MCF 10A (cell line): ENCODE measurements at regions of chr20 and their contacts with region 1.

Region 1: GRCh38 chr20:645318-646106 is 7.5 kb downstream of the SRXN1 start:
- DNase-seq: peak; percentile 58
- H3K4me3 Mint-ChIP-seq: no peak overlapping the region
- H3K27ac Mint-ChIP-seq: no peak overlapping the region
- H3K4me1 Mint-ChIP-seq: peaks cover 5% of the 10 kb centered on the region
- H3K27me3 Mint-ChIP-seq: no peaks in the 10 kb centered on the region
- CTCF ChIP-seq: peak; percentile 91

Region 2: GRCh38 chr20:535958-536357 is 109.6 kb before region 1 on chr20:
- CTCF ChIA-PET with region 1: interaction called, 11 read pairs
- POLR2A ChIA-PET with region 1: no interaction called
- intact Hi-C with region 1: no loop called
- DNase-seq: no peak
- H3K4me3 Mint-ChIP-seq: peak overlapping the region; percentile 44
- H3K27ac Mint-ChIP-seq: no peak overlapping the region
- H3K4me1 Mint-ChIP-seq: peaks cover 39% of the 10 kb centered on the region
- H3K27me3 Mint-ChIP-seq: no peaks in the 10 kb centered on the region
- CTCF ChIP-seq: no peak

Region 3: DNA sequence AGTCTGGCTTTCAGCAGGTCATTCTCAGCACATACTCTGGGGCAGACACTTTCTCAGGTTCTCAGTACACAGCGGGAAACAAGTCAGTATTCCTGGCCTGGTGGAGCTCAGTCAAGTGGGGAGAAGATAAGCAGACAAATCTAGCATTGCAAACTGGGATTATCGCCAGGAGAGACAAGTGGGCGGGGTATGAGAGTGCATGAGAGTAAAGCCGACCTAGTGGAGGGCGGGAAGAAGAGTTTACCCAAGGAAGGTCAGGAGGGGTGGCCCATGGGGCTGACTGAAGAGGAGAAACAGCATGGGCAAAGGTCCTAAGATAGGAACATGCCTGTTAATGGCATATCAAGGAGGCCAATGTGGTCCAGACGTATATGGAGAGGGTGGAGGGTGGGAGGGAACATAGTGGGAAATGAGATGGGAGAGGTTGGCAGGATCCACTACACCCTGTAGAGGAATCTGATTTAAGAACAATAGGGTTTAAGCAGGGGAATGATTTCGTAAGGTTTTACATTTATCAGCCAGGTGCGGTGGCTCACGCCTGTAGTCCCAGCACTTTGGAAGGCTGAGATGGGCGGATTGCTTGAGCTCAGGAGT is 89.5 kb before region 1 on chr20:
- CTCF ChIA-PET with region 1: interaction called, 69 read pairs
- POLR2A ChIA-PET with region 1: interaction called, 4 read pairs
- intact Hi-C with region 1: loop called (anchors 1 kb)
- DNase-seq: peak; percentile 22
- H3K4me3 Mint-ChIP-seq: no peak overlapping the region
- H3K27ac Mint-ChIP-seq: no peak overlapping the region
- H3K4me1 Mint-ChIP-seq: peaks cover 7% of the 10 kb centered on the region
- H3K27me3 Mint-ChIP-seq: peaks cover 33% of the 10 kb centered on the region
- CTCF ChIP-seq: no peak

Region 4: DNA sequence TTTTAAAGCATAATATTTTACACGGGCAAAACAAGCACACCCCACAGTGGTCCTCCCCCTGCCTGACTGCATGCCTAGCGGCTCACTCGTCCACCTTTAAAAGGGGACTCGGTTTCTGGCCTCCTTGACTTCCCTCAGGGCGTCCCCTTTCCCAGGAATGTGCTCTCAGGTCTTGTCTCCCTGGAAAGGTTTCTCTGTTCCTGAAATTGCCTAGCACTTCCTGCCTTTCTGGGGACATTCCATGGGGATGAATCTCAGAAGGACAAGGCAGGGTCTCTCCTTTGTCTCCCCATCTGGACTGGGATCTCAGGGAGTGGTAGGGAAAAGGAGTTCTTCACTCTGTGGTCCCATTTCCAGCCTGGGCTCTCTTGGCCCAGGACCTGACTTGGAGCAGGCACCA is 40.3 kb before region 1 on chr20:
- CTCF ChIA-PET with region 1: interaction called, 11 read pairs
- POLR2A ChIA-PET with region 1: no interaction called
- intact Hi-C with region 1: no loop called
- DNase-seq: no peak
- H3K4me3 Mint-ChIP-seq: no peak overlapping the region
- H3K27ac Mint-ChIP-seq: no peak overlapping the region
- H3K4me1 Mint-ChIP-seq: no peaks in the 10 kb centered on the region
- H3K27me3 Mint-ChIP-seq: no peaks in the 10 kb centered on the region
- CTCF ChIP-seq: no peak

Region 5: DNA sequence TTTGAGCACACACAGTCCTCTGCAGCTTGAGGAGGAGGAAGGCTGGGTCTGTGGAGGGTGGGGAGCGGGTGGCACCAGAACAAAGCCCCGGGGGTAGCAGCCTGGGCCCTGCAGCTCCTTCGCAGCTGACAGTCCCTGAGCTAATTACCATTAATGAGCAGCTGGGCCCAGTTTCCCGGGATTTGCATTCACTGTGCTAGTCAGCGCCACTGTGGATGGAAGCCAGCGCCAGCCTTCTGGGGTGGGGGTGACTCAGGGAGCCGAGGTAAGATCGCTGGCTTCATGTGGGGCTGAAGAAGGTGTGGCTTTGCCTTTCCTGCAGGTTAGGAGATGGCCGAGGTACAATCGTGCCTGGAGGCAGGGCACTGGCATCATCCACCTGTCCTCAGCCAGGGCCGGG is 11.0 kb before region 1 on chr20:
- CTCF ChIA-PET with region 1: interaction called, 36 read pairs
- POLR2A ChIA-PET with region 1: interaction called, 3 read pairs
- intact Hi-C with region 1: no loop called
- DNase-seq: no peak
- H3K4me3 Mint-ChIP-seq: no peak overlapping the region
- H3K27ac Mint-ChIP-seq: no peak overlapping the region
- H3K4me1 Mint-ChIP-seq: no peaks in the 10 kb centered on the region
- H3K27me3 Mint-ChIP-seq: peaks cover 2% of the 10 kb centered on the region
- CTCF ChIP-seq: no peak

Region 6: GRCh38 chr20:667391-667964 is 22.0 kb after region 1 on chr20:
- CTCF ChIA-PET with region 1: interaction called, 11 read pairs
- POLR2A ChIA-PET with region 1: interaction called, 4 read pairs
- intact Hi-C with region 1: no loop called
- DNase-seq: peak; percentile 55
- H3K4me3 Mint-ChIP-seq: no peak overlapping the region
- H3K27ac Mint-ChIP-seq: no peak overlapping the region
- H3K4me1 Mint-ChIP-seq: no peaks in the 10 kb centered on the region
- H3K27me3 Mint-ChIP-seq: peaks cover 41% of the 10 kb centered on the region
- CTCF ChIP-seq: peak; percentile 86

Region 7: DNA sequence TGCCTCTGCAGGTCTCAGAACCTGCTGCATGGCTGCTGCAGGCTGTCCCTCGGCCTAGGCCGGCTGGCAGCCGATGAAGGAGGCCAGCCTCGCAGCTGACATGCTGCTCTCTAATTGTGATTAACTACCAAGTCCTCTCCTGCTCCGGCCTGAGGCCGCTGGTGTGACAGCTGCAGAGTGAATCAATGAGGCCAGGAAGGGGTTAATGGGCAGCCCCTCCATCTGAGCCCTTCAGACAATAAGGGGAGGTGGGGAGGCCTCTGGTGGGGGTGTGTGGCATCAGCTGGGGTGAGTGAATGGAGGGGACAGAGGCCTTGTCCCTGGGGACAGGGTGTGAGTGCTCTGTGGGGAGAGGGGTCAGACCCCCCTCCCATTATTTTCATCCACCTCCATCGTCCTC is 88.3 kb after region 1 on chr20:
- CTCF ChIA-PET with region 1: interaction called, 37 read pairs
- POLR2A ChIA-PET with region 1: no interaction called
- intact Hi-C with region 1: no loop called
- DNase-seq: no peak
- H3K4me3 Mint-ChIP-seq: no peak overlapping the region
- H3K27ac Mint-ChIP-seq: no peak overlapping the region
- H3K4me1 Mint-ChIP-seq: no peaks in the 10 kb centered on the region
- H3K27me3 Mint-ChIP-seq: peaks cover 38% of the 10 kb centered on the region
- CTCF ChIP-seq: no peak